Mammary epithelial cell (primary cell): ENCODE measurements at regions of chr4 and their contacts with region 1.

Region 1: DNA sequence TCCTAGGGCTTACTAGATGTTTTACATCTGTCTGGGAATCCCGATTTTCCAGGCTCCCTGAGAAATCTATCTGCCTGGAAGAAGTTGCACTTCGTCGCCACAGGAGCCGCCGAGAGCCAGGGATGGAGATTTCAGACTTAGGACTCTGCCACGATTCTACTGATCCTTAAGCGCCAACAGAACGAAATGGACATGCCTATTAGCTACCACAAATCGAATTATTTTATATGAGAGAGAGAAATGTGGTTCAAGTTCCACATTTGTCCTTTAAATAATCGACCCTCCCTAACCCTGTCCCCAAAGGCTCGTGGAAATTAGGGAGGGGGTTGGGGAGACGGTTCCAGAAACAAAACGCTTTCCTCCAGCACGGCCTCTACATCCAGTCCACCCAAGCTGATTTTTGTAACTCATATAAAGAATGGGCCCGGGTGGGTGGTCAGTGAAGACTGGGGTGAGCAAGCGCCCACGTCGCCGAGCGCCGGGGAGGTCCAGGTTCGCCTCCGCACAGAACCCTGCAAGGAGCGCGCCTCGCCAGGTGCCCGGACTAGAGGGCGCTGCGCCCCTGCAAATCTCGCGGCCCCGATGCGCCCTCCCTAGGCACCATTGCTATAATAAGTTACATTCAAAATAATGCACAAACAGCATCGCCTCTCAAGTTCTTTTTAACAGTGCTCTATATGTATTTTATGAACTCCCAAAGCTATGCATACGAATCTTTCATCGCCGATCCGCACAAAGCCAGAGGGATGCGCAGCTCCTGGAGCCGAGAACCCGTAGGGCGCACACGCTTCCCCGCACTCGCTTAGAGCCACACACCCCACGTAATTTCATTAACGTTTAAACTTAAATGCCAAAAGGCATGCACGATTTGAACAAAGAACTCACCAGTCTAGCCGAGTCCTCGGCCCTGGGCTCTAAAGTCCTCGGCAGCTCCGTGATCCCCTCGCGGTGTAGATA is 2.1 kb upstream of the FAT1 start:
- DNase-seq: peak; percentile 77
- H3K4me3 ChIP-seq: peak overlapping the region; percentile 92 to 100 (median 99)
- H3K27ac ChIP-seq: peak overlapping the region; percentile 99
- H3K4me1 ChIP-seq: peaks cover 30% of the 10 kb centered on the region
- H3K27me3 ChIP-seq: no peaks in the 10 kb centered on the region
- CTCF ChIP-seq: peak; percentile 52 to 90

Region 2: DNA sequence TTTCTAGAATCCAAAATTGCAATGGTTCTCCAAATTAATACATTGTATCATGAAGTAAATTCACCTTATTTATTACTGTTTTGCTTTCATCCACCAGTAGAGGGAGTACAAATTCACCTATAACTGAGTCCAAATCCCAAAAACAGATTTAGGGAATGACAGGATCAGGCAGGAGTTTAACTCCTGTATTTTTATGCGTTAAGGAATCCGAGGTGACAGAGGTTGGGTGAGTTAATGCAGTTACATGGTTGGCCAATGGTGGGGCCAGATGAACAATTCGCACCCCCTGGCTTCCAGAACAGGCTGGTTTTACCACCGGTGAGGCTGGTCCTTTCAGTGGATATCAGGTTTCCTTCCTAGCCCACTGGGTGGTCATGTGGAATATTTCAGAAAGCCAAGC is 252.8 kb before region 1 on chr4:
- CTCF ChIA-PET with region 1: no interaction called
- dilution Hi-C with region 1: no loop called
- in situ Hi-C with region 1: no loop called
- intact Hi-C with region 1: loop called (anchors 5 kb)
- DNase-seq: peak; percentile 7
- H3K4me3 ChIP-seq: no peak overlapping the region
- H3K27ac ChIP-seq: no peak overlapping the region
- H3K4me1 ChIP-seq: no peaks in the 10 kb centered on the region
- H3K27me3 ChIP-seq: no peaks in the 10 kb centered on the region
- CTCF ChIP-seq: peak; percentile 55 to 65

Region 3: GRCh38 chr4:186587416-186588018 is 138.2 kb before region 1 on chr4:
- CTCF ChIA-PET with region 1: no interaction called
- dilution Hi-C with region 1: no loop called
- in situ Hi-C with region 1: no loop called
- intact Hi-C with region 1: no loop called
- DNase-seq: no peak
- H3K4me3 ChIP-seq: no peak overlapping the region
- H3K27ac ChIP-seq: no peak overlapping the region
- H3K4me1 ChIP-seq: no peaks in the 10 kb centered on the region
- H3K27me3 ChIP-seq: no peaks in the 10 kb centered on the region
- CTCF ChIP-seq: peak; percentile 76 to 84

Region 4: DNA sequence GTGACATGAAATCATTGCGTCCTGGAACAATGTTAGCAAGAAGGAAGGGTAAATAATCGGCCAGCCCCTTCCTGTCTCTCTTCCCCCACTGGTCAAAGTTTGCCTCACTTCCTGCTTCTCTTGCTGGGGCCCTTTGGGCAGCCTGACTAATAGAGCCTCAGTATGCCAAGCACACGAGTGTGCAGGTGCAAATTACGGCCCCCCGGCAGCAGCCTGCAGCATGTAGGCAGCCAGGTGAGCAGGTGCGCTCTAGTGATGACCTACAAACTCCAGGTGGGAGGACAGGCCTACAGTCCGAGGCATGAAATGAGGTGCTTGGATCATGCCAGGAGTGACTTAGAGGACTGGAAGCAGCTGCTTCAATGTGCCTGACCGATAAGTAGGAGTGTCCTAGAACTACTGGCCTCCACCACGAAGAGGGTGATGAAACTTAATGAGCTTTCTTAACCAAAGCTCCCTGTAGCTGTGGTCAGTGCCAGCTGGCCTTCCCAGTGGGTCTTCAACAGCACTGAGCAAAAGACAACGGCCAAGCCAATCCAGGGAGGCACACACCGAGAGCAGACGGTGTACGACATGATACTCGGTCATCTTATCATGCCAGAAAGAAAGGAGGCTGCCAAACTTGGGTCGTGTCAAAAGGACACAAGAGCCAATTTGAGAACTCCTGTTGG is 24.0 kb after region 1 on chr4:
- CTCF ChIA-PET with region 1: no interaction called
- dilution Hi-C with region 1: no loop called
- in situ Hi-C with region 1: no loop called
- intact Hi-C with region 1: no loop called
- DNase-seq: no peak
- H3K4me3 ChIP-seq: no peak overlapping the region
- H3K27ac ChIP-seq: no peak overlapping the region
- H3K4me1 ChIP-seq: no peaks in the 10 kb centered on the region
- H3K27me3 ChIP-seq: no peaks in the 10 kb centered on the region
- CTCF ChIP-seq: no peak

Region 5: GRCh38 chr4:186829740-186830449 is 104.1 kb after region 1 on chr4:
- CTCF ChIA-PET with region 1: no interaction called
- dilution Hi-C with region 1: no loop called
- in situ Hi-C with region 1: no loop called
- intact Hi-C with region 1: loop called (anchors 5 kb)
- DNase-seq: no peak
- H3K4me3 ChIP-seq: no peak overlapping the region
- H3K27ac ChIP-seq: no peak overlapping the region
- H3K4me1 ChIP-seq: peaks cover 23% of the 10 kb centered on the region
- H3K27me3 ChIP-seq: no peaks in the 10 kb centered on the region
- CTCF ChIP-seq: no peak

Region 6: GRCh38 chr4:186920483-186920882 is 194.7 kb after region 1 on chr4:
- CTCF ChIA-PET with region 1: no interaction called
- dilution Hi-C with region 1: no loop called
- in situ Hi-C with region 1: loop called (anchors 25 kb)
- intact Hi-C with region 1: loop called (anchors 2 kb)
- DNase-seq: peak; percentile 73
- H3K4me3 ChIP-seq: no peak overlapping the region
- H3K27ac ChIP-seq: peak overlapping the region; percentile 99
- H3K4me1 ChIP-seq: peaks cover 17% of the 10 kb centered on the region
- H3K27me3 ChIP-seq: no peaks in the 10 kb centered on the region
- CTCF ChIP-seq: no peak

Region 7: GRCh38 chr4:187071946-187072600 is 346.3 kb after region 1 on chr4:
- CTCF ChIA-PET with region 1: no interaction called
- dilution Hi-C with region 1: no loop called
- in situ Hi-C with region 1: no loop called
- intact Hi-C with region 1: loop called (anchors 5 kb)
- DNase-seq: no peak
- H3K4me3 ChIP-seq: no peak overlapping the region
- H3K27ac ChIP-seq: no peak overlapping the region
- H3K4me1 ChIP-seq: peaks cover 5% of the 10 kb centered on the region
- H3K27me3 ChIP-seq: no peaks in the 10 kb centered on the region
- CTCF ChIP-seq: no peak

Region 8: GRCh38 chr4:187380181-187380641 is 654.5 kb after region 1 on chr4:
- CTCF ChIA-PET with region 1: interaction called, 3 read pairs
- dilution Hi-C with region 1: no loop called
- in situ Hi-C with region 1: no loop called
- intact Hi-C with region 1: loop called (anchors 2 kb)
- DNase-seq: no peak
- H3K4me3 ChIP-seq: no peak overlapping the region
- H3K27ac ChIP-seq: no peak overlapping the region
- H3K4me1 ChIP-seq: peaks cover 5% of the 10 kb centered on the region
- H3K27me3 ChIP-seq: no peaks in the 10 kb centered on the region
- CTCF ChIP-seq: peak; percentile 42 to 60